ENCODE measurements at regions of chr5 and their contacts with region 1.

Region 1: DNA sequence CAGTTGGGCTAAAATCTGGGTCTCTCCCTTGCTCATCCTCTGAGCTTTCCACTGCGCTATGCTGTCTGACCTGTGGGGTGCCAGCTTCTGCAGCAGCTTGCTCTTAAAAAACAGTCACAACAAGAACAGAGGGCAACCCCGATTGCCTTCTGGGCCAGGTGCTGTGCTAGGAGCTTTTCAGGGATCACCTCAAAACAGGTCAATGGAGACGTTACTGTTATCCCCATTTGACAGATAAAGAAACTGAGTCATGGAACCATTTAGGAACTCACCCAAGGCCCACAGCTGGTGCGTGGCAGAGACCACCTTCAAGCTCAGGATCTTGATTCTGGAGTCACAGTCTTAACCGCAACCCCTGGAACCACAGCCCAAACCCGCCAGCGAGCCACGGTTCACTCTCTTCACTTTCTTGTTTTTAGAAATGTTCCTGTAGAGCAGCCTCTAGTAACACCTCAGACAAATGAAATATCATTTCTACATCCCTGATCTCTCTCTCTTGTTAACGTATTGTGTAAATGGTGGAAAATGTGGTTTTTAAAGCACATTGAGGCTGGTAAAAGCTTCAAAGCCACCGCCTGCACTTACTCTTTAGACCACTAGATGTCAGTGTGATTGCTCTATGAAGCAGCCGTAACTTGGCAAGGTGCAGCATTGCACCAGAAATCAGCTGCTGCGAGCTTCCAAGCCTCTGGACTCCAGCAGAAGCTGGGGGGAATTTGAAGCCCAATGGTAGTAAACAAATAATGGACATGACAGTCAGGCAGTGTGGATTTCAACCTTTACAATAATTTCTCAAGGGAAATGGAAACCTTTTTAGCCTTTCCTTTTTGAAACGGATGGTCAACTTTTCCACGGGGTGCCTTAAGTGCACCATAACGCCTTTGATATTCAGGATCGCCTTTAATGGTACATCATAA is 1.7 kb downstream of the FYB1 start:
- DNase-seq: peak; percentile 80
- H3K4me3 ChIP-seq: no peak overlapping the region
- H3K27ac ChIP-seq: no peak overlapping the region
- H3K4me1 ChIP-seq: no peaks in the 10 kb centered on the region
- H3K27me3 ChIP-seq: no peaks in the 10 kb centered on the region
- CTCF ChIP-seq: peak; percentile 94

Region 2: GRCh38 chr5:39195198-39195826 is 22.3 kb before region 1 on chr5:
- CTCF ChIA-PET with region 1: no interaction called
- POLR2A ChIA-PET with region 1: interaction called, 15 read pairs
- intact Hi-C with region 1: no loop called
- DNase-seq: no peak
- H3K4me3 ChIP-seq: no peak overlapping the region
- H3K27ac ChIP-seq: no peak overlapping the region
- H3K4me1 ChIP-seq: no peaks in the 10 kb centered on the region
- H3K27me3 ChIP-seq: peaks cover 7% of the 10 kb centered on the region
- CTCF ChIP-seq: no peak

Region 3: DNA sequence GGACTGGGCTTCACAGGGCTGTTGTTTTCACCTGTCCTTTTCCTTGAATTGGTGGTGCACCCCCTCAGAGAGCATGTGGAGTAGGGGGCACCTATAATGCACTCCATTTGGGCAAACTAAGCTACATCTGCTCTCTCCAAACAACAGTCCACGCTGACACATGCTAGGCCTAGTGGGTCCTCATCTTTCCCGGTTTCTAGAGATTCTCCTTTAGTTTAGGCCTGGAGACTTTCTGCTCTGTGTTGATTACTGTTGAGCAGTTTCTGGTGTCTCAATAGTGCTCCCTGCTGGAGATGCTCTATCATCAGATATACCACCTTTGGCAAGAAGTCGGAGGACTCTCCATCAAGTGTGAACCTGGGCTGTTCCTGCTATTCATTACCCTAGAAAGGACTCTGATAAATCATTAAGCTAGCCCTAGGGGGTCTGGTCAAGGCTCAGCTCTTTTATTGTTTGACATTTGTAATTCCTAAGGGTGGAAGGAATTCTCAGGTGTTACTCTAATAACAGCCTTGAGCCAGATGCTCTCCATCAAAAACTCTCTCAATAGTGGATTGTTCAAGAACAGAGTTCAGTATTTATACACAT is 65.7 kb after region 1 on chr5:
- CTCF ChIA-PET with region 1: interaction called, 4 read pairs
- POLR2A ChIA-PET with region 1: no interaction called
- intact Hi-C with region 1: loop called (anchors 5 kb)
- DNase-seq: peak; percentile 59
- H3K4me3 ChIP-seq: no peak overlapping the region
- H3K27ac ChIP-seq: no peak overlapping the region
- H3K4me1 ChIP-seq: no peaks in the 10 kb centered on the region
- H3K27me3 ChIP-seq: no peaks in the 10 kb centered on the region
- CTCF ChIP-seq: peak; percentile 66

Region 4: DNA sequence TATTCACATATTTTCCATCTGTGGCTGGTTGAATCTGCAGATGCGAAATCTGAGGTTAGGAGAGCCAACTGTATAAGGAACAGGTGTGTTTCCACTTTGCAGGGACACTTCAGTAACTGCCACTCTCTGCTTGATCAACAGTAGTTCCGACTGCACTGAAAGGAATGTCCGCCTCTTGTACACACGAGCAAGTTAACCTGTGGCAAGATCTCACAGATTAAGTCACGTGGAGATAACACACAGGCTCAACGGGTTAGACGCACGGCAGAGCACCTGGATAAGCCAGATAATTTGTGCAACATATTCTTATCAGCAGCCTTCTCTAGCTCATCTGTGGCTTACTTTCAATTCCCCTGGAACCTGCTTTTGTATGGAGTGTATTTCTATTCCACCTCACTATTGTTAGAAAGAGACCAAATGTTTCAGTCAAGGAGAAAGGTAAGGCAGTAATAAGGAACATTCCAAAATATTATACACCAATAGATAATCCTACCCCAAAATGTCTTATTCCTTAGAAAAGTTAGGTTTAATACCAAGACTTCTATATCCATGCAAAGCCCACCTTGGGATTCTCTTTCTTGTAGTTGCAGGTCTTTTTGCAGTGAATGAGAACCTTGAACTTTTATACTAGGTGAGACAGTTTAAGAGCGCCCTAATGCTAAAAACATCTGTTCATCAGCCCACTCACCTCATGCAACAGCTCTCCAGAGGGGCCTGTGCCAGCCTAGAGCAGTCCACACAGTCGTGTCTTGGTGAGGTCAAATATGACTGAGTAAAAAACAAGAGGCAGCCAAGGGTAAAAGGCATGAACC is 153.1 kb after region 1 on chr5:
- CTCF ChIA-PET with region 1: interaction called, 9 read pairs
- POLR2A ChIA-PET with region 1: no interaction called
- intact Hi-C with region 1: loop called (anchors 5 kb)
- DNase-seq: no peak
- H3K4me3 ChIP-seq: no peak overlapping the region
- H3K27ac ChIP-seq: no peak overlapping the region
- H3K4me1 ChIP-seq: no peaks in the 10 kb centered on the region
- H3K27me3 ChIP-seq: no peaks in the 10 kb centered on the region
- CTCF ChIP-seq: no peak

Region 5: GRCh38 chr5:39547553-39548154 is 330.0 kb after region 1 on chr5:
- CTCF ChIA-PET with region 1: interaction called, 6 read pairs
- POLR2A ChIA-PET with region 1: no interaction called
- intact Hi-C with region 1: loop called (anchors 1 kb)
- DNase-seq: peak; percentile 83
- H3K4me3 ChIP-seq: no peak overlapping the region
- H3K27ac ChIP-seq: no peak overlapping the region
- H3K4me1 ChIP-seq: peaks cover 8% of the 10 kb centered on the region
- H3K27me3 ChIP-seq: no peaks in the 10 kb centered on the region
- CTCF ChIP-seq: peak; percentile 84

Region 6: DNA sequence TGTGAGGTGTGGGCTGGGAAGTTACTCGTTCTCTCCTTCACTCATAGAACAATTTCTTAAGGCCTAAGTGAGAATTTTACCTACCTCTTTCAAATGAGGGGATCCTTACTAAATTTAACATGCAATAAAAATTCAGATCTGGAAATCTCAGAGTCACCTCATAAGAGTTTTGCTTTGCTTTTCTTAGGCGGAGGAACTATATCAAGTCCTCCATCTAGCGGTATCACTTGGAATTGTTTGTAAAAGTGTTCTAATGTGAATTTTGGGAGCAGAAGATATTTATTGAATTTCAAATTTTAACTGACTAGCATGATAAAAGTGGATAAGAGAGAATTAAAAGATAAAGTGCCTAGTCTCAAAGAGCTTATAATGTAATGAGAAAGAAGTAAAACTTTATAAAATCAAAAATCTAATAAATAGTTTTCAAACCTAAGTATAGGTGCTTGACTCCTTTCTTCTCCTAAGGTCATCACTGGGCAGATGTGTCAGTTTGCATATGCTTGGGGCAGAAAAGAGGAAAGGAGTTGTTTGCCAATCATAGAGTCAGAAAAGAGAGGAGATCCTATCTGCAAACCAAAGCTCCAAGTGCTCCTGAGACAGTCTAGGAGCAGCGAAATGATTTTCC is 352.9 kb after region 1 on chr5:
- CTCF ChIA-PET with region 1: interaction called, 7 read pairs
- POLR2A ChIA-PET with region 1: no interaction called
- intact Hi-C with region 1: loop called (anchors 1 kb)
- DNase-seq: peak; percentile 65
- H3K4me3 ChIP-seq: no peak overlapping the region
- H3K27ac ChIP-seq: no peak overlapping the region
- H3K4me1 ChIP-seq: no peaks in the 10 kb centered on the region
- H3K27me3 ChIP-seq: peaks cover 11% of the 10 kb centered on the region
- CTCF ChIP-seq: peak; percentile 70